ENCODE measurements at regions of chr14 and their contacts with region 1.

Region 1: DNA sequence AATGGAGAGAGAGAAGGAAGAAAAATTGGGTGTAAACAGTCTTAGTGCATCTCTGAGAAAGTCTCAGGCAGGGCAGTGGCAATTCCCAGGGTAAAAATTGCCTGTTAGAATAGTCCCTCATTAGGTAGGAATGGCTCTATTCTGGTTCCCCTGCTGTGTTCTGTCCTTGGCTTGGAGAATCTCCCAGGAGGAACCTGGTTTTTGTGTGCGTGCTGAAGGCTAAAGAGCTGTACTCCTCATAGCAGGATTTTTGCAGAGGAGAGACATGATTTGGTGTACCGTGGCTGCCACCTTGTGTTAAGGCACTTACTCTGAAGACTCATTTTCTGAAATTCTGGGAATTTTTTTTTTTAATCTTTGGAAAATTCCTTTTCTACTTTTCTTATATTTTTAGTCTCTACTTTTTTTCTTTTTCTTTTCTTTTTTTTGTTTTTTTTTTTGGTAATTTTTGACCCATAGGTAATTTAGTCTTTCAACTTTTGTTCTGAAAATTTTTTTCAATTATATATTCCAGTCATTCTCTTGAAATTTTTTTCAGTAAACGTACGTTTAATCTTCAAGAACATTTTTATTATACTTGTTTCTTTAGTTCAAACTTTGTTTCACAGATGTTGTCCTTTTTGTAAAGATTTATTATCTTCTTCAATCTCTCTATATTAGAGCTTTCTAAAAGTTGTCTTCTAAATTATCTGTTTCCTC is 63.8 kb downstream of the FBXO33 start:
- DNase-seq: peak; percentile 14 to 39
- ATAC-seq: peak; percentile 82 to 85
- H3K4me3 ChIP-seq: no peak overlapping the region
- H3K27ac ChIP-seq: peak overlapping the region in 2 of 4 donors; percentile 19 to 42
- H3K4me1 ChIP-seq: peaks cover 16 to 23% of the 10 kb centered on the region in 2 donors
- H3K27me3 ChIP-seq: no peaks in the 10 kb centered on the region
- CTCF ChIP-seq: peak in 3 of 5 experiments; percentile 36 to 50 (median 43)
- POLR2A ChIP-seq: no peak

Region 2: DNA sequence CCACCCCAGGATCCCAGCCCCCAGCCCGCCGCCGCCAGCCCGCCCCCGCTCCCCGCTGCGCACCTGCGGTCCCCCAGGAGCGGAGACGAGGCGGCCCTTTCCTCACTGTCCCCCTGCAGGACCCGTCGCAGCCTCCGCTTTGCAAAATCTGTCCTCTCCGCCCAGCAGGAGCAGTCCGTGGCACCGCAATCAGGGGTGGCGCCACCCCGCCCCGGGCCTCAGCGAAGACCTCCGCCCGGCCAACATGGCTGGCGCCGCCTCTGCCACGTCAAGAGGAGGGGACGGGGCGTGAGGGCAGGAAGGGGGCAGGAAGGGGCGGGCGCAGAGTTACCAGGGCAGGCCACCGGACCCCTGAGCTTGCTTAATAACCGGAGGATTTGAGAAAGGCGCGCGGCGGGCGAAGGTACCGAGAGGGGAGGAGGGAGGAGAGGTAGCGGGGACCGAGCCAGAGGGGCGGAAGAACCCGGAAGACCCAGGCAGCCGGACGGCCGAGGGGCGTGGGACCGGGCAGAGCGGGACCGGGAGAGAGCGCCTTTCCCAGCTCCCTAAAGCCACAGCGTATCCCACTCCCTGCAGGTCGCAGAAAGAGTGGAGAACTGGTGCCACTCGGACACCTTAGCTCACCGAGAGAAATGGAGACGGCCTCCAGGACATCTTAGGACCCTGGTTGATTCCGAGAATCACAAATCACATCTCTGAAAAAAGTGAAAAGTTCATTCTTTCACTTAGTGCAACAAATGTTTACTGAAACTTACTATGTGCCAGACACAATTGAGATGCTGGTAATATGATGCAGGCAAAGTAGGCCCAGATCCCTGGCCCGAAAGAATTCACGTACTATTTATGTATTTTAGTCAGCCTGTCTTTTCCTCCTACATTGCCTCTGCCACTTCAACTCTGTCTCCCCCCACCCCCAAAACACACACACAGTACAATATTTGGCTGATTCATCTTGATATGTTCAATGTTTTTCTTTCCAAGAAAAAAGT is 265.1 kb before region 1 on chr14 and contains the start of gene SEC23A:
- in situ Hi-C with region 1: no loop called
- intact Hi-C with region 1: loop called (anchors 2 kb)
- DNase-seq: peak; percentile 79 to 90
- ATAC-seq: peak; percentile 93 to 94
- H3K4me3 ChIP-seq: peak within 1 kb of the TSS; percentile 69 to 88 (median 77)
- H3K27ac ChIP-seq: peak within 1 kb of the TSS; percentile 84 to 97 (median 95)
- H3K4me1 ChIP-seq: peaks cover 6 to 23% of the 10 kb centered on the region in 2 donors
- H3K27me3 ChIP-seq: no peaks in the 10 kb centered on the region
- CTCF ChIP-seq: no peak
- POLR2A ChIP-seq: peak; percentile 84
- total RNA-seq, gene SEC23A: 79.9 to 183 (median 93.9) TPM

Region 3: DNA sequence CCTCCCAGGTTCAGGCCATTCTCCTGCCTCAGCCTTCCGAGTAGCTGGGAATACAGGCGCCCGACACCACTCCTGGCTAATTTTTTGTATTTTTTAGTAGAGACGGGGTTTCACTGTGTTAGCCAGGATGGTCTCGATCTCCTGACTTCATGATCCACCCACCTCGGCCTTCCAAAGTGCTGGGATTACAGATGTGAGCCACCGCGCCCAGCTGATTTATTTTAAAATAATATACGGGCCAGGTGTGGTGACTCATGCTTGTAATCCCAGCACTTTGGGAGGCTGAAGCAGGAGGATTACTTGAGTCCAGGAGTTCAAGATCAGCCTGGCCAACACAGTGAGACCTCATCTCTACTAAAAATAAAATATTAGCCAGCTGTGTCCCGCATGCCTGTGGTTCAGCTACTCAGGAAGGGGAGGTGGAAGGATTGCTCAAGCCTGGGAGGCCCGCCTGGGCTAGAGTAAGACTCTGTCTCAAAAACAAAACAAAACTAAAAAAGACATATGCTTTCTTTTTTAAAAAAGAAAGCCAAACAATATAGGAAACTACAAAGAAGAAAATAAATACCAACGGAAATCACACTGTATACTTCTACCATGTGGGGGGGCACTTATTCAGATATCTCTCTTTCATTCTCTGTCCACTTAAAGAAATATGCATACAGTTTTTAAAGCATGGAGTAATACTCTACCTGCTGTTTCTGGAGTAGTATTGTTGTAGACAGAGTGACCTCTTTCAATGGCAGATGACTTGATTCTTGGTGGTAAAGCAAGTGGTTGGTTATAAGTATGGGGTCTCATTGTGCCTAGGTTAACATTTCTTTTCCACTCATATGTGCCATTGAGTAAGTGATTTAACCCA is 135.6 kb before region 1 on chr14:
- in situ Hi-C with region 1: no loop called
- intact Hi-C with region 1: loop called (anchors 5 kb)
- DNase-seq: no peak
- ATAC-seq: peak; percentile 54 to 56
- H3K4me3 ChIP-seq: no peak overlapping the region
- H3K27ac ChIP-seq: no peak overlapping the region
- H3K4me1 ChIP-seq: peaks cover 0 to 4% of the 10 kb centered on the region in 2 donors
- H3K27me3 ChIP-seq: no peaks in the 10 kb centered on the region
- CTCF ChIP-seq: no peak
- POLR2A ChIP-seq: no peak

Region 4: GRCh38 chr14:39266871-39267591 is 101.4 kb before region 1 on chr14:
- in situ Hi-C with region 1: no loop called
- intact Hi-C with region 1: loop called (anchors 5 kb)
- DNase-seq: peak; percentile 71 to 82
- ATAC-seq: peak; percentile 83 to 88
- H3K4me3 ChIP-seq: peak overlapping the region; percentile 77 to 97 (median 91)
- H3K27ac ChIP-seq: peak overlapping the region; percentile 95 to 99 (median 98)
- H3K4me1 ChIP-seq: peaks cover 27 to 33% of the 10 kb centered on the region in 2 donors
- H3K27me3 ChIP-seq: no peaks in the 10 kb centered on the region
- CTCF ChIP-seq: peak in 2 of 5 experiments; percentile 17 to 26
- POLR2A ChIP-seq: peak; percentile 70 to 77

Region 5: DNA sequence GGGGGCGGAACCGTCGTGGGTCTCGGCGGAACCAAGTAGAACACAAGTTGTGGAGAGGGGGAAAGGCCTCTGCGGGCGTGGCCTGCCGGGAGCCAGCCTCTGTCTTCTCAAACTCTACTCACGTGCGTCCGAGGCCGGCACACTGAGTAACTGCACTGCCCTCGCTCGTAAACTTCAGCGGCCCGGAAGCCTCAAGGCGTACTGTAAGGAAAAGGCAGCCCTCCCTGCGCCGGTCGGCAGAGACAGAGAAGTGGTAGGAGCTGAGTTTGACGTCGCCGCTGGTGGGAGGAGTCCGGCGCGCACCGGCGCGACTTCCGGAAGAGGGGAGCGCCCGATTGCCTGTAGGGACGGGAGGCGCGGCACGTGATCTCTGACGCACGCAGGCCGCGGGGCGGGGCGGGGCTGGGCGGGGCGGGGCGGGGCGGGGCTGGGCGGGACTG is 63.8 kb after region 1 on chr14 and contains the start of gene FBXO33:
- in situ Hi-C with region 1: no loop called
- intact Hi-C with region 1: loop called (anchors 5 kb)
- DNase-seq: peak; percentile 93 to 96
- ATAC-seq: peak; percentile 87 to 89
- H3K4me3 ChIP-seq: peak within 1 kb of the TSS; percentile 83 to 94 (median 94)
- H3K27ac ChIP-seq: peak within 1 kb of the TSS; percentile 96 to 99 (median 97)
- H3K4me1 ChIP-seq: peaks cover 35 to 37% of the 10 kb centered on the region in 2 donors
- H3K27me3 ChIP-seq: no peaks in the 10 kb centered on the region
- CTCF ChIP-seq: no peak
- POLR2A ChIP-seq: no peak
- total RNA-seq, gene FBXO33: 5.3 to 8.0 (median 5.9) TPM